Naive thymus-derived CD4-positive, alpha-beta T cell (primary cell): ENCODE measurements at regions of chr3 and their contacts with region 1.

Region 1: GRCh38 chr3:105366326-105367062 is at the start of gene ALCAM:
- DNase-seq: peak; percentile 66 to 85 (median 73)
- ATAC-seq: peak; percentile 72
- H3K4me3 ChIP-seq: peak within 1 kb of the TSS; percentile 81
- H3K4me3 Mint-ChIP-seq: peak within 1 kb of the TSS; percentile 90 to 97 (median 92)
- H3K27ac ChIP-seq: peak within 1 kb of the TSS; percentile 70
- H3K27ac Mint-ChIP-seq: peak within 1 kb of the TSS; percentile 82 to 99 (median 94)
- H3K4me1 ChIP-seq: peaks cover 3 to 10% of the 10 kb centered on the region in 2 donors
- H3K4me1 Mint-ChIP-seq: peaks cover 22 to 40% (median 29%) of the 10 kb centered on the region in 7 donors
- H3K27me3 ChIP-seq: no peaks in the 10 kb centered on the region
- H3K27me3 Mint-ChIP-seq: peaks cover 14 to 32% (median 24%) of the 10 kb centered on the region in 5 donors
- total RNA-seq, gene ALCAM: 3.4 to 10.3 (median 4.4) TPM

Region 2: GRCh38 chr3:104102386-104102785 is 1264.1 kb before region 1 on chr3:
- CTCF ChIA-PET with region 1: no interaction called
- POLR2A ChIA-PET with region 1: no interaction called
- intact Hi-C with region 1: loop called in 1 of 2 experiments (anchors 2 kb)
- DNase-seq: no peak
- ATAC-seq: no peak
- H3K4me3 ChIP-seq: no peak overlapping the region
- H3K4me3 Mint-ChIP-seq: no peak overlapping the region
- H3K27ac ChIP-seq: no peak overlapping the region
- H3K27ac Mint-ChIP-seq: no peak overlapping the region
- H3K4me1 ChIP-seq: no peaks in the 10 kb centered on the region
- H3K4me1 Mint-ChIP-seq: no peaks in the 10 kb centered on the region
- H3K27me3 ChIP-seq: no peaks in the 10 kb centered on the region
- H3K27me3 Mint-ChIP-seq: no peaks in the 10 kb centered on the region

Region 3: GRCh38 chr3:104596551-104596950 is 769.9 kb before region 1 on chr3:
- CTCF ChIA-PET with region 1: interaction called, 5 read pairs
- POLR2A ChIA-PET with region 1: no interaction called
- intact Hi-C with region 1: loop called (anchors 1 kb)
- DNase-seq: peak in 5 of 9 donors; percentile 6 to 17 (median 13)
- ATAC-seq: peak; percentile 52
- H3K4me3 ChIP-seq: no peak overlapping the region
- H3K4me3 Mint-ChIP-seq: no peak overlapping the region
- H3K27ac ChIP-seq: no peak overlapping the region
- H3K27ac Mint-ChIP-seq: no peak overlapping the region
- H3K4me1 ChIP-seq: no peaks in the 10 kb centered on the region
- H3K4me1 Mint-ChIP-seq: peaks cover 0 to 5% (median 0%) of the 10 kb centered on the region in 7 donors
- H3K27me3 ChIP-seq: no peaks in the 10 kb centered on the region
- H3K27me3 Mint-ChIP-seq: peaks cover 0 to 6% (median 0%) of the 10 kb centered on the region in 5 donors

Region 4: GRCh38 chr3:105674437-105675065 is 308.1 kb after region 1 on chr3:
- CTCF ChIA-PET with region 1: no interaction called
- POLR2A ChIA-PET with region 1: no interaction called
- intact Hi-C with region 1: loop called in 1 of 2 experiments (anchors 5 kb)
- DNase-seq: no peak
- ATAC-seq: no peak
- H3K4me3 ChIP-seq: no peak overlapping the region
- H3K4me3 Mint-ChIP-seq: no peak overlapping the region
- H3K27ac ChIP-seq: no peak overlapping the region
- H3K27ac Mint-ChIP-seq: peak overlapping the region in 2 of 9 donors; percentile 38 to 48
- H3K4me1 ChIP-seq: no peaks in the 10 kb centered on the region
- H3K4me1 Mint-ChIP-seq: peaks cover 0 to 14% (median 6%) of the 10 kb centered on the region in 7 donors
- H3K27me3 ChIP-seq: no peaks in the 10 kb centered on the region
- H3K27me3 Mint-ChIP-seq: no peaks in the 10 kb centered on the region

Region 5: DNA sequence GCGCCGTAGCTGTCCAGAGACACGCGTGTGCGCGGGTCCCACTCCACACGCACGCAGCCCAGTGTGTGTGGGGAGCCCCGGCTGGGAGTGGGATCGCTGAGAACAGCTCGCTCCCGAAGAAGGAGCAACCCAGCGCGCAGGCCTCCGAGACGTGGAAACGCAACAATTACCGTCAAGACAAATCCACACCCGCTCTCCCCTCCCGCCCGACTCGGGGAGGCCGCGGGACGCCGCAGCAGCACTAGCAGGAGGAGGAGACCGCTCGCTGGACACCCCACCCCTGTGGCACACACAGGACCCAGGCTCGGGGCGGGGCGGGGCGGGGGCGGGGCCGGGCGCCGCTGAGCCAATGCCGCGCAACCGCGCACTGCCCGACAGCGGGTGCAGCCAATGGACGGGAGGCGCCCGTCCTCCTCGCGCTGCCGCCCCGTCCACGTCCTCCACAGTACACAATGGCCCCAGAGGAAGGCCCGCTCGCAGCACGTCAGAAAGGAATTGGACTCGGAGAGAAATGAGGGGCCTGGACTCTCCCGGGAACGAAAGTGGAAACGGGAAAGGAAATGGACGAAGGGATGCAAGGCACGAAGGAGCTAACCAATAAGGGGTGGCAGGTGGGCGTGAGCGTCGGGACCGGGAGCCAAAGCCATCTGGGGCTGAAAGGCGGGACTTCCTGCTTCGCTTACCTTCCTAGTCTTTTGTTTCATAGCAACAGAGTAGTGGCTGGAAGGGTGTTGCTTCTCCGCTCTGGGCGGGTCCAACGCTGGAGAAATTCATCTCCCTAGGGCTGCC is 502.4 kb after region 1 on chr3 and contains the start of gene CBLB:
- CTCF ChIA-PET with region 1: no interaction called
- POLR2A ChIA-PET with region 1: no interaction called
- intact Hi-C with region 1: loop called (anchors 2 kb)
- DNase-seq: peak; percentile 72 to 89 (median 85)
- ATAC-seq: peak; percentile 93
- H3K4me3 ChIP-seq: peak within 1 kb of the TSS; percentile 86
- H3K4me3 Mint-ChIP-seq: peak within 1 kb of the TSS; percentile 89 to 100 (median 97)
- H3K27ac ChIP-seq: peak within 1 kb of the TSS; percentile 91
- H3K27ac Mint-ChIP-seq: peak within 1 kb of the TSS; percentile 89 to 98 (median 94)
- H3K4me1 ChIP-seq: peaks cover 31 to 41% of the 10 kb centered on the region in 2 donors
- H3K4me1 Mint-ChIP-seq: peaks cover 23 to 58% (median 49%) of the 10 kb centered on the region in 7 donors
- H3K27me3 ChIP-seq: no peaks in the 10 kb centered on the region
- H3K27me3 Mint-ChIP-seq: no peaks in the 10 kb centered on the region
- total RNA-seq, gene CBLB: 82.8 to 135 (median 109) TPM

Region 6: DNA sequence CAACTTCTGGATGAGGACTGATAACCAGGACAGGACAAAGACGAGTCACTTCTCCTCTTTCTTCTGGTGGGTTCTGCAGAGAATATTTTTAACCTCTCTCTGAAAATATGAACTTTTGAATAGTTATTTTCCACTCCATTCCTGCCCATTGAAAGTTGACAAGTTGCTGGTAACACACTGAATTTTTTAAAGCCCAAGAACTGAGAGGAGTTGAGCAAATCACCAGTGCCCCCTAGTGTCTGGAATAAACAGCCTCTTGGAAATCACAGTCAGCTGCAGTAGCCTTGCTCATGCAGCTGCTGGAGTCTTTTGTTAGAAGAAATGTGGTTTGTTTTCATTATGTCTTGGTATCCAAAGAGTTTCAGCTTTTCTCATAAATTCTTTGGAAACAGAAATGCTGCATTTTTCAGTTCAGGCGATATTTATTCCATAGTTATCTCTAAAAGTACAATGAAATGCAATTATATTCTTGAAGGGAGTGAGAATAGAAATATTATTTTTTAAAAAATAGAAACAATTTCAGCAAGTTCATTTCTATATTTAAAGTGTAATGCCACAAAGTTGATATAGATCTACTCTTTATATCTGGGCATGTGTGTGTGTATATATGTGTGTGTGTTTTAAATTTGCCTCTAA is 1243.3 kb after region 1 on chr3:
- CTCF ChIA-PET with region 1: no interaction called
- POLR2A ChIA-PET with region 1: no interaction called
- intact Hi-C with region 1: loop called (anchors 2 to 5 kb)
- DNase-seq: peak in 8 of 9 donors; percentile 37 to 71 (median 60)
- ATAC-seq: peak; percentile 81
- H3K4me3 ChIP-seq: no peak overlapping the region
- H3K4me3 Mint-ChIP-seq: no peak overlapping the region
- H3K27ac ChIP-seq: no peak overlapping the region
- H3K27ac Mint-ChIP-seq: no peak overlapping the region
- H3K4me1 ChIP-seq: no peaks in the 10 kb centered on the region
- H3K4me1 Mint-ChIP-seq: peaks cover 0 to 12% (median 0%) of the 10 kb centered on the region in 7 donors
- H3K27me3 ChIP-seq: no peaks in the 10 kb centered on the region
- H3K27me3 Mint-ChIP-seq: peaks cover 0 to 4% (median 3%) of the 10 kb centered on the region in 5 donors